ENCODE measurements at regions of chr21 and their contacts with region 1.

Region 1: DNA sequence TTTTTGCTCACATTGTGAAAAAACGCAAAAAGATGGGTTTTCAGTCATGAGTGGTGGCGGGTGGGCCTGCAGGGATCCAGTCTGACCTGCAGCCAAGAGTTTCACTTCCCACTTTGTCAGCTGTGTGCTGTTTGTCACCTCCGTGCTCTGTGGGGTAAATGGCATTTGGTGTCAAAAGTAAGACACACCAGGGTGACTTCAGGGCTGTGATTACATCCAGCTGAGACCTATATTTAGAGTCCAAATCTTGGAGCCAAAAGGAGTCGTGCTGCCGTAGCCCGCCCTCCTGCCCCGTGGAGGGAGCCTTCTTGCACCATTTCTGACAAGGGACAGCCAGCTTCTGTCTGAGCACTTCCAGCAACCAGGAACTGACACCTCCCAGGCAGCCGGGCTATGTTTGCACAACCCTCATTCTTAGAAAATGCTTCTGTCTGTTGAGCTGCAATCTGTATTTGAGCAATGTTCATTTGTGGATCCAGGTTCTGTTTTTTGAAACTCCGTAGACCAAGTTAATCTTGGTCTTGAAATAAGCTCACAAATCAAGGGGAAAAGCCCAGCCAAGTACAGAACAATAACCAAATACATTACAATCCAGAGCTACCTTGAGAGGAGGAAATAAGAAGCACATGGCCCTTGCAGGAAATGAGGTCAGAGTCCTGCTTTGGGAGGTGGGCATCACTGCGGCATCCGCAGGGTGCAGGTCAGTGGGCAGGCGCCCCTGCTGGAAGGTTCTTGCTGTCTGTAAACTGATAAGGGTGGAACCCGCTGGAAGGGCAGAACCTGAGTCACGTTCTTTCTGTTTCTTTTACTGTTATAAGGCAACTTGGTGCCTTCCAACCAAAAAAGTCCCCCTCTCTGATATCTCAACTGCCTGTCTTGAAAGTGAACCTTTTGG is 14.4 kb downstream of the ABCG1 start:
- DNase-seq: peak; percentile 94
- H3K4me3 Mint-ChIP-seq: peak overlapping the region; percentile 74
- H3K27ac Mint-ChIP-seq: peak overlapping the region; percentile 96
- H3K4me1 Mint-ChIP-seq: peaks cover 94% of the 10 kb centered on the region
- H3K27me3 Mint-ChIP-seq: no peaks in the 10 kb centered on the region

Region 2: DNA sequence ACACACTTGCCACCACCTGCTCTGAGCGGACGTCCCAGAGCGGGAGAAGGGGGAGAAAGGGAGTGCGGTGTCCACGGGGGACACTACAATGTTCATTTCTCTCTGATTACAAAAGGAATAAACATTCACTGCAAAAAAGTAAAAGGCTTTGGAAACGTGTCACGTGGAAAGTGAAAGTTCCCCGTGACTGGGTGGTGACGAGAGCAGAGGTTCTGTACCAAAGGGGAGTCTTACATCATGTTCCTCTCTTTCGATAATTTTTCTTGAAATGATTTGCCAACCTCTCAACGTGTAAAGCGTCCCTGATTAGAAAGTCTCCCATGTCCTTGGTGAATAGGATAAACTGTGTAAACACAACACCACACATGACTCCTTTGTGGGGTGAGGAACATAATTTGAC is 332.2 kb before region 1 on chr21:
- CTCF ChIA-PET with region 1: no interaction called
- POLR2A ChIA-PET with region 1: no interaction called
- intact Hi-C with region 1: loop called (anchors 1 kb)
- DNase-seq: peak; percentile 78
- H3K4me3 Mint-ChIP-seq: no peak overlapping the region
- H3K27ac Mint-ChIP-seq: peak overlapping the region; percentile 66
- H3K4me1 Mint-ChIP-seq: peaks cover 30% of the 10 kb centered on the region
- H3K27me3 Mint-ChIP-seq: no peaks in the 10 kb centered on the region

Region 3: GRCh38 chr21:42062236-42063022 is 170.9 kb before region 1 on chr21:
- CTCF ChIA-PET with region 1: no interaction called
- POLR2A ChIA-PET with region 1: no interaction called
- intact Hi-C with region 1: loop called (anchors 5 kb)
- DNase-seq: peak; percentile 89
- H3K4me3 Mint-ChIP-seq: peak overlapping the region; percentile 60
- H3K27ac Mint-ChIP-seq: peak overlapping the region; percentile 34
- H3K4me1 Mint-ChIP-seq: peaks cover 43% of the 10 kb centered on the region
- H3K27me3 Mint-ChIP-seq: no peaks in the 10 kb centered on the region

Region 4: GRCh38 chr21:42220138-42220701 is 13.1 kb before region 1 on chr21:
- CTCF ChIA-PET with region 1: interaction called, 33 read pairs
- POLR2A ChIA-PET with region 1: interaction called, 121 read pairs
- intact Hi-C with region 1: loop called (anchors 1 kb)
- DNase-seq: peak; percentile 80
- H3K4me3 Mint-ChIP-seq: peak overlapping the region; percentile 78
- H3K27ac Mint-ChIP-seq: peak overlapping the region; percentile 85
- H3K4me1 Mint-ChIP-seq: peaks cover 21% of the 10 kb centered on the region
- H3K27me3 Mint-ChIP-seq: no peaks in the 10 kb centered on the region

Region 5: GRCh38 chr21:42892931-42893755 is 659.8 kb after region 1 on chr21 and contains the start of gene NDUFV3:
- CTCF ChIA-PET with region 1: no interaction called
- POLR2A ChIA-PET with region 1: no interaction called
- intact Hi-C with region 1: loop called (anchors 5 kb)
- DNase-seq: peak; percentile 100
- H3K4me3 Mint-ChIP-seq: peak within 1 kb of the TSS; percentile 87
- H3K27ac Mint-ChIP-seq: peak within 1 kb of the TSS; percentile 89
- H3K4me1 Mint-ChIP-seq: peaks cover 13% of the 10 kb centered on the region
- H3K27me3 Mint-ChIP-seq: no peaks in the 10 kb centered on the region
- total RNA-seq, gene NDUFV3: 16.1 to 17.3 TPM